ENCODE measurements at regions of chr9 and their contacts with region 1.

Region 1: GRCh38 chr9:7405924-7406604 is 393.5 kb downstream of the DMAC1 start:
- DNase-seq: no peak
- H3K4me3 ChIP-seq: no peak overlapping the region
- H3K27ac ChIP-seq: no peak overlapping the region
- H3K4me1 ChIP-seq: no peaks in the 10 kb centered on the region
- H3K27me3 ChIP-seq: no peaks in the 10 kb centered on the region
- CTCF ChIP-seq: no peak
- EP300 ChIP-seq: no peak
- RAD21 ChIP-seq: no peak

Region 2: GRCh38 chr9:7368410-7369292 is 37.4 kb before region 1 on chr9:
- CTCF ChIA-PET with region 1: no interaction called
- POLR2A ChIA-PET with region 1: no interaction called
- DNase-seq: no peak
- H3K4me3 ChIP-seq: no peak overlapping the region
- H3K27ac ChIP-seq: peak overlapping the region; percentile 69 to 79; a peak in 3 of 4 replicates
- H3K4me1 ChIP-seq: peaks cover 9 to 17% of the 10 kb centered on the region in 2 experiments
- H3K27me3 ChIP-seq: no peaks in the 10 kb centered on the region
- CTCF ChIP-seq: no peak
- EP300 ChIP-seq: peak in 1 of 2 experiments; percentile 92; a peak in 2 of 4 replicates
- RAD21 ChIP-seq: no peak

Region 3: DNA sequence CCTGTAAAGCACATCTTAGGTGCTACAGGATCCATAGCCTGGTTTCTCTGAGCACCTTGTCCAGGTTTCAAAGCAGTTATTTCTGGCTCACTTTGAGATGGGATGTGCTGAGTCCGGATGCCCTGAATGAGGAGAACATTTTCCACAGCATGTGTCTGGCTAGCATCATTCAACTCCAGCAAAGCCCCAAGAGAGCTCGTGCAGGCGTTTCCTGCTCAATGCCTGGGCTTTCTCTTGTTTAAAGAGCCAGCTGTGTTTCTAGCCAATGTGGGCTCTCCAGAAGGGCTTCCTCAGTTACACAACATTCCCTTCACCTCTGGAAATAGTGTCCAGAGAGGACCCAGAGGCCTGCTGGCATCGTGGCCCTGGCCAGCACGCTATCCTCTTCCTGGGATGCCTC is 18.2 kb before region 1 on chr9:
- CTCF ChIA-PET with region 1: interaction called, 12 read pairs
- POLR2A ChIA-PET with region 1: no interaction called
- DNase-seq: no peak
- H3K4me3 ChIP-seq: no peak overlapping the region
- H3K27ac ChIP-seq: no peak overlapping the region
- H3K4me1 ChIP-seq: no peaks in the 10 kb centered on the region
- H3K27me3 ChIP-seq: no peaks in the 10 kb centered on the region
- CTCF ChIP-seq: no peak
- EP300 ChIP-seq: no peak
- RAD21 ChIP-seq: no peak

Region 4: GRCh38 chr9:7394007-7394774 is 11.9 kb before region 1 on chr9:
- CTCF ChIA-PET with region 1: interaction called, 12 read pairs
- POLR2A ChIA-PET with region 1: no interaction called
- DNase-seq: no peak
- H3K4me3 ChIP-seq: no peak overlapping the region
- H3K27ac ChIP-seq: no peak overlapping the region
- H3K4me1 ChIP-seq: no peaks in the 10 kb centered on the region
- H3K27me3 ChIP-seq: no peaks in the 10 kb centered on the region
- CTCF ChIP-seq: no peak
- EP300 ChIP-seq: no peak
- RAD21 ChIP-seq: no peak

Region 5: GRCh38 chr9:7536310-7536939 is 130.4 kb after region 1 on chr9:
- CTCF ChIA-PET with region 1: interaction called, 42 read pairs
- POLR2A ChIA-PET with region 1: no interaction called
- DNase-seq: peak; percentile 45
- H3K4me3 ChIP-seq: no peak overlapping the region
- H3K27ac ChIP-seq: no peak overlapping the region
- H3K4me1 ChIP-seq: no peaks in the 10 kb centered on the region
- H3K27me3 ChIP-seq: no peaks in the 10 kb centered on the region
- CTCF ChIP-seq: peak; percentile 70
- EP300 ChIP-seq: no peak
- RAD21 ChIP-seq: peak; percentile 84

Region 6: DNA sequence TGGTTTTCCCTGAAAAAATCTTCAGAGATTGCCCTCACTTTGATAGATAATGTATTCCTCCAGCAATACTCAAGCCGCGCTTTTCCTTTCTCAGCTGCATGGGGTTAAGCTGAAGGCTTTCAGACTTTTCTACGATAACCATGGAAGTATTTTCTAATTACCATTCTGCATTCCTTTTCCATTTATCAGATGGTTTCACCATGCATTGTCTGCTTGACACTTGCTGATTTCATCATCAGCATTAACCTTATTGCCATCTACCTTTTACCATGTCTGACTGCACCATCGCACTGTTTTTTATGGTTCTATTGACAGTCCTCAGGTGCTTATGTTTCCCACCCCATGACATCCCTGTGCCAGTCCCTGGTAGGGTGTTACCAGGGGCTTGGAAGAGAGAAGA is 301.9 kb after region 1 on chr9:
- CTCF ChIA-PET with region 1: no interaction called
- POLR2A ChIA-PET with region 1: no interaction called
- DNase-seq: no peak
- H3K4me3 ChIP-seq: no peak overlapping the region
- H3K27ac ChIP-seq: no peak overlapping the region
- H3K4me1 ChIP-seq: no peaks in the 10 kb centered on the region
- H3K27me3 ChIP-seq: no peaks in the 10 kb centered on the region
- CTCF ChIP-seq: no peak
- EP300 ChIP-seq: no peak
- RAD21 ChIP-seq: no peak

Region 7: GRCh38 chr9:7906745-7907550 is 500.9 kb after region 1 on chr9:
- CTCF ChIA-PET with region 1: no interaction called
- POLR2A ChIA-PET with region 1: no interaction called
- DNase-seq: no peak
- H3K4me3 ChIP-seq: no peak overlapping the region
- H3K27ac ChIP-seq: no peak overlapping the region
- H3K4me1 ChIP-seq: no peaks in the 10 kb centered on the region
- H3K27me3 ChIP-seq: no peaks in the 10 kb centered on the region
- CTCF ChIP-seq: no peak
- EP300 ChIP-seq: no peak
- RAD21 ChIP-seq: no peak

Measured in SK-N-SH (cell line).